ENCODE measurements at regions of chr18 and their contacts with region 1.

Region 1: DNA sequence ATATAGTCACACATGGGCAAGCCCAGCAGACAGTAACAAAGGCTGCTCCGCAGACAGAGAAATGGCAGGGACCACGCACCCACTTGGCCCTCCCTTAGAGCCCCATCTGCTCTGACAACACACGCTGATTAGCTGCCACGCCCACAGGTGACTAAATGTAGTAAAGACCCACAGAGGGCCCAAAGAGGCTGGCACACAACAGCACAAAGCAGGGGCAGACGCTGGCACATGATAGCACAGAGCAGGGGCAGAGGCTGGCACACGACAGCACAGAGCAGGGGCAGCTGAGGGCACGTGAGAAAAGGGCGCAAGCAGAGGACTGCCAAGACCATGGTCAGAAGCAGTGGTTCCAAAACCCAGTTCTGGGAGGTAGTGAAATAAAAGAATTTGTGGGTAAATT is 10.6 kb downstream of the AFG3L2 start:
- DNase-seq: peak in 4 of 5 donors; percentile 55 to 82 (median 68)
- ATAC-seq: peak; percentile 60 to 81 (median 70)
- H3K4me3 ChIP-seq: no peak overlapping the region
- H3K27ac ChIP-seq: peak overlapping the region in 11 of 12 donors; percentile 6 to 99 (median 47)
- H3K4me1 ChIP-seq: peaks cover 0 to 93% (median 35%) of the 10 kb centered on the region in 12 donors
- H3K27me3 ChIP-seq: no peaks in the 10 kb centered on the region
- CTCF ChIP-seq: no peak
- POLR2A ChIP-seq: no peak

Region 2: DNA sequence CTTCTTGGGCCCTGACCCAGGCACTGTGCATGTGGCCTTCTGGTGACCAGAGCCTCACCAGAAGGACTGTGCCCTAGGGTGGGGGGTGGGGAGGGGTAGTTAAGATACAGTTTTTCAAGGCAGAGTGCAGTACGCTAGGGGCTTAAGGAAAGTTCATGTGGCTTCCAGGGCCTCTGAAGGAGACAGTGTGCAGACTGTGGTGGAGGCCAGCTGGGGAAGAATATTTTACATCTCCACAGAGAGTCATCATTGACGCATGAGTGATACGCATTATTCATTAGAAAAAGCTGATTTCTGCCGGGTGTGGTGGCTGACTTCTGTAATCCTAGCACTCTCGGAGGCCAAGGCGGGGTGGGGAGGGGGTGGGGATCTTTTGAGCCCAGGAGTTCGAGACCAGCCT is 389.5 kb before region 1 on chr18:
- intact Hi-C with region 1: no loop called
- DNase-seq: no peak
- ATAC-seq: no peak
- H3K4me3 ChIP-seq: no peak overlapping the region
- H3K27ac ChIP-seq: no peak overlapping the region
- H3K4me1 ChIP-seq: peaks cover 0 to 20% (median 9%) of the 10 kb centered on the region in 12 donors
- H3K27me3 ChIP-seq: no peaks in the 10 kb centered on the region
- CTCF ChIP-seq: no peak
- POLR2A ChIP-seq: no peak

Region 3: GRCh38 chr18:12327510-12328178 is 38.7 kb before region 1 on chr18:
- intact Hi-C with region 1: loop called in 5 of 10 experiments (anchors 5 to 10 kb)
- DNase-seq: peak; percentile 77 to 91 (median 86)
- ATAC-seq: peak; percentile 61 to 84 (median 79)
- H3K4me3 ChIP-seq: no peak overlapping the region
- H3K27ac ChIP-seq: peak overlapping the region; percentile 15 to 66 (median 48)
- H3K4me1 ChIP-seq: peaks cover 0 to 34% (median 21%) of the 10 kb centered on the region in 12 donors
- H3K27me3 ChIP-seq: no peaks in the 10 kb centered on the region
- CTCF ChIP-seq: peak; percentile 62 to 90 (median 78)
- POLR2A ChIP-seq: no peak

Region 4: DNA sequence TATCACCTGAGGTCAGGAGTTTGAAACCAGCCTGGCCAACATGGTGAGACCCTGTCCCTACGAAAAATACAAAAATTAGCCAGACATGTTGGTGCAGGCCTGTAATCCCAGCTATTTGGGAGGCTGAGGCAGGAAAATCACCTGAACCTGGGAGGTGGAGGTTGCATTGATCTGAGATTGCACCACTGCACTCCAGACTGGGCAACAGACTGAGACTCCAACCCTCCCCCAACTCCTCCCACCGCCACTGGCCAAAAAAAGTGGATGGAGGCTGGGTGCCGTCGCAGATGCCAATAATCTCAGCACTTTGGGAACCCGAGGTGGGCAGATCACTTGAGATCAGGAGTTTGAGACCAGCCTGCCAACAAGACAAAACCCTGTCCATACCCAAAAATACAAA is 301.7 kb after region 1 on chr18:
- intact Hi-C with region 1: no loop called
- DNase-seq: no peak
- ATAC-seq: no peak
- H3K4me3 ChIP-seq: no peak overlapping the region
- H3K27ac ChIP-seq: no peak overlapping the region
- H3K4me1 ChIP-seq: no peaks in the 10 kb centered on the region
- H3K27me3 ChIP-seq: no peaks in the 10 kb centered on the region
- CTCF ChIP-seq: no peak
- POLR2A ChIP-seq: no peak

Measured in heart left ventricle (tissue), 16 donors.